ENCODE measurements at regions of chrX and their contacts with region 1.

Region 1: GRCh38 chrX:103214870-103215424 is at the start of gene BEX4:
- DNase-seq: peak; percentile 64
- H3K4me3 ChIP-seq: peak within 1 kb of the TSS; percentile 43 to 94 (median 61)
- H3K27ac ChIP-seq: peak within 1 kb of the TSS; percentile 70
- H3K4me1 ChIP-seq: peaks cover 5% of the 10 kb centered on the region
- H3K27me3 ChIP-seq: no peaks in the 10 kb centered on the region
- CTCF ChIP-seq: no peak
- POLR2A ChIP-seq: peak; percentile 62
- total RNA-seq, gene BEX4: 28.0 and 30.3 TPM in 2 replicates

Region 2: GRCh38 chrX:103248553-103248952 is 33.6 kb after region 1 on chrX:
- CTCF ChIA-PET with region 1: interaction called, 25 read pairs
- POLR2A ChIA-PET with region 1: no interaction called
- dilution Hi-C with region 1: no loop called
- intact Hi-C with region 1: loop called (anchors 1 kb)
- DNase-seq: peak; percentile 33
- H3K4me3 ChIP-seq: no peak overlapping the region
- H3K27ac ChIP-seq: no peak overlapping the region
- H3K4me1 ChIP-seq: peaks cover 3% of the 10 kb centered on the region
- H3K27me3 ChIP-seq: no peaks in the 10 kb centered on the region
- CTCF ChIP-seq: no peak
- POLR2A ChIP-seq: no peak

Region 3: GRCh38 chrX:103254921-103255493 is 40.1 kb after region 1 on chrX and contains the start of gene TCEAL8:
- CTCF ChIA-PET with region 1: interaction called, 7 read pairs
- POLR2A ChIA-PET with region 1: no interaction called
- dilution Hi-C with region 1: no loop called
- intact Hi-C with region 1: loop called (anchors 1 kb)
- DNase-seq: peak; percentile 77
- H3K4me3 ChIP-seq: peak within 1 kb of the TSS; percentile 72 to 91 (median 76)
- H3K27ac ChIP-seq: peak within 1 kb of the TSS; percentile 70
- H3K4me1 ChIP-seq: peaks cover 12% of the 10 kb centered on the region
- H3K27me3 ChIP-seq: peaks cover 0 to 4% of the 10 kb centered on the region in 2 experiments
- CTCF ChIP-seq: no peak
- POLR2A ChIP-seq: peak; percentile 45
- total RNA-seq, gene TCEAL8: 51.8 and 52.0 TPM in 2 replicates

Region 4: DNA sequence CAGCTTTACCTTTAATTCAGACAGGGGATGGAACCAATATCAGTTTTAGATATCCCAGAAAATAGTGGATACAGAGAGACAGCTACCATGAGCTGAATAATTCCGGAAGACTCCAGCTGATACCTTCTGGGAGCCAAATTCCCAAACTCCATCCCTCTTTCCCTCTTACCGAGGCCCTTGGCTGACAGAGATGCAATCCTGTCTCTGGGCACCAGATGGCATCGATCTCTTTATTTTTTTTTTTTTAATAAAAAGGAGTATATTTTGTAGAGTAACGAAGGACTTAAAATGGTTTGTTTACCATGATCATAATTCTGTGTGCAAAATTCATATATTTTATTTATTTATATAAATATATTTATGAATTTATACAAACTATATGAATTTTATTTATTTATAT is 273.4 kb after region 1 on chrX:
- CTCF ChIA-PET with region 1: interaction called, 25 read pairs
- POLR2A ChIA-PET with region 1: no interaction called
- dilution Hi-C with region 1: no loop called
- intact Hi-C with region 1: loop called (anchors 1 kb)
- DNase-seq: peak; percentile 6
- H3K4me3 ChIP-seq: no peak overlapping the region
- H3K27ac ChIP-seq: no peak overlapping the region
- H3K4me1 ChIP-seq: no peaks in the 10 kb centered on the region
- H3K27me3 ChIP-seq: no peaks in the 10 kb centered on the region
- CTCF ChIP-seq: peak; percentile 7 to 25
- POLR2A ChIP-seq: no peak

Measured in endothelial cell of umbilical vein (primary cell).